Common myeloid progenitor, CD34-positive (primary cell): ENCODE measurements at regions of chr1 and their contacts with region 1.

Region 1: GRCh38 chr1:116826818-116827606 is 72.8 kb downstream of the CD2 start:
- DNase-seq: peak in 2 of 3 donors; percentile 47 to 64
- H3K4me3 ChIP-seq: no peak overlapping the region
- H3K27ac ChIP-seq: peak overlapping the region in 1 of 2 experiments; percentile 80
- H3K4me1 ChIP-seq: peaks cover 0 to 30% (median 23%) of the 10 kb centered on the region in 4 experiments
- H3K27me3 ChIP-seq: no peaks in the 10 kb centered on the region

Region 2: GRCh38 chr1:116842654-116843053 is 15.6 kb after region 1 on chr1:
- CTCF ChIA-PET with region 1: interaction called, 14 read pairs
- POLR2A ChIA-PET with region 1: no interaction called
- DNase-seq: no peak
- H3K4me3 ChIP-seq: no peak overlapping the region
- H3K27ac ChIP-seq: no peak overlapping the region
- H3K4me1 ChIP-seq: peaks cover 0 to 8% (median under 1%) of the 10 kb centered on the region in 4 experiments
- H3K27me3 ChIP-seq: no peaks in the 10 kb centered on the region